Psoas muscle (tissue), 8 donors: ENCODE measurements at regions of chr1 and their contacts with region 1.

Region 1: DNA sequence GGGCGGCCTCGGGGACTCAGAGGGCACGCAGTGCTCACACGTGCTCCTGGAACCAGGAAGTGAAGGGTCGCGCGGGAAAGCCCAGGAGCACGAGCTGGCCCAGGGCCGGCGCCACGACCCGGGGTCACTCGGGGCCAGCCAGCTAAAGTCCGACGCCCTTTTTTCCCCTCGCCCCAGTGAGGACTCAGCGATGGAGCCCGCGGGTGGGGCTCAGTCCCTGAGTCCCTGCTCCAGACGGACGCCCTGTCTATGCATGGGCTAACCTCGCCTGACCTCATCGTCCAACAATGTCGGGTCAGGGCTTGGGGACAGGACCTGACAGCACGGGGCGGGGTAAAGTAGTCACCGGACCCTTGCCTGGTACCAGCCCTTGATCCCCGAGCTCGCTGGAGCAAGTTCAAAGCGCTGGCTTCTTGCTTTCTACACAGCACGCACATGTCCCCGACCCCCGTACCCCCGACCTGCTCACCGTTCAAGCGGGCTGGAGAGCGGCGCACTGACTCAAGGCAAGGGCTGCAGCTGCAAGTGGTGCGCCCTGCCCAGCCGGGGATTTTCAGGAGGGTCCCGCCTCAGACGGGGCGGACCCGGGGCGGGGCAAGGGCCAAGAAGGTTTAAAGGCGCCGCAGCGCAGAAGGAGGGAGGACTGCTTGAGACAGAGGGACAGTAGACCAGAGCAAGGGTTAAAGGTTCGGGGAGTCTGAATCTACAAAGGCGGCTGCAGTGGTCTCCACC is at the start of gene TAGLN2:
- DNase-seq: peak; percentile 92 to 93
- ATAC-seq: peak; percentile 64 to 79 (median 74)
- H3K4me3 ChIP-seq: peak within 1 kb of the TSS; percentile 82
- H3K27ac ChIP-seq: peak within 1 kb of the TSS; percentile 84
- H3K4me1 ChIP-seq: peaks cover 15% of the 10 kb centered on the region
- H3K27me3 ChIP-seq: peaks cover 0 to 30% (median 3%) of the 10 kb centered on the region in 3 donors
- CTCF ChIP-seq: no peak
- total RNA-seq, gene TAGLN2: 42.8 to 61.3 (median 45.6) TPM

Region 2: GRCh38 chr1:159854693-159855192 is 70.4 kb before region 1 on chr1:
- intact Hi-C with region 1: loop called in 1 of 2 experiments (anchors 5 kb)
- DNase-seq: peak; percentile 86 to 92
- ATAC-seq: peak; percentile 93 to 98 (median 95)
- H3K4me3 ChIP-seq: peak overlapping the region; percentile 81
- H3K27ac ChIP-seq: peak overlapping the region; percentile 83
- H3K4me1 ChIP-seq: peaks cover 9% of the 10 kb centered on the region
- H3K27me3 ChIP-seq: peaks cover 0 to 1% (median 0%) of the 10 kb centered on the region in 3 donors
- CTCF ChIP-seq: peak; percentile 20

Region 3: DNA sequence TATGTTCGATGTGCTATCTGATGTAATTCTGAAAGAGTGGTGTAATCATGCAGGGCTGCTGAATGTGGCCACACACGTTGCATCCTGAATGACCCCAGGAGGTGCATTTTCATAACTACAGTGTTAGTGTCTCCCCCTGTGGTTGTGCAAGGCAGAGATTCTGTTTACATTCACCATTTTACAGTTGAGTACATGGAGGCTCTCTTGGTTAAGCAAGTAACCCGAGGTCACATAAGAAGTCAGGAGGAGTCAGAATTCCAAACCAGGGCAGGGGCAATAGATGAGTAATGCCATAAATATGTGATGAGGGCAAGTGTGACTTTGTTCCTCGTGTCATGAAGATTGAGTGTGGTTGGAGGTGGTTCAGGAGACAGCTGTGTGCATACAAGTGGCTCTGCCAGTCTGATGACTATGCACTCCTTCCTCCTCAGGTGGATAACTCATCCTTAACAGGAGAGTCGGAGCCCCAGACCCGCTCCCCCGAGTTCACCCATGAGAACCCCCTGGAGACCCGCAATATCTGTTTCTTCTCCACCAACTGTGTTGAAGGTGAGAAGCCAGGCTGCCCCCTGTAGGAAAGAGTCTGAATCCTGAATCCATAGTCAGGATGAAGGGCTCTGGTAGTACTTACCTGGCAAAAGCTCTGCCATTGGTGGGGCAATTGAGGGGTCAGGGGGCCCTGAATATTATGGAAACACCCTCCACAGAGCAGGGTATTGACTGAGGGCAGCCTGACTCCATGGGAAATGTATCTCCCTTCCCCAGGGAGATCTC is 199.7 kb after region 1 on chr1:
- intact Hi-C with region 1: no loop called
- DNase-seq: peak in 1 of 2 donors; percentile 72
- ATAC-seq: peak; percentile 67 to 74 (median 73)
- H3K4me3 ChIP-seq: peak overlapping the region; percentile 37
- H3K27ac ChIP-seq: peak overlapping the region; percentile 98
- H3K4me1 ChIP-seq: peaks cover 88% of the 10 kb centered on the region
- H3K27me3 ChIP-seq: no peaks in the 10 kb centered on the region
- CTCF ChIP-seq: no peak